ENCODE measurements at regions of chr9 and their contacts with region 1.

Region 1: GRCh38 chr9:112750111-112750767 is at the start of gene SNX30:
- DNase-seq: peak; percentile 79
- H3K4me3 Mint-ChIP-seq: peak within 1 kb of the TSS; percentile 84
- H3K27ac Mint-ChIP-seq: peak within 1 kb of the TSS; percentile 86
- H3K4me1 Mint-ChIP-seq: peaks cover 52% of the 10 kb centered on the region
- H3K27me3 Mint-ChIP-seq: peaks cover 3% of the 10 kb centered on the region
- total RNA-seq, gene SNX30: 2.4 and 2.8 TPM in 2 replicates

Region 2: DNA sequence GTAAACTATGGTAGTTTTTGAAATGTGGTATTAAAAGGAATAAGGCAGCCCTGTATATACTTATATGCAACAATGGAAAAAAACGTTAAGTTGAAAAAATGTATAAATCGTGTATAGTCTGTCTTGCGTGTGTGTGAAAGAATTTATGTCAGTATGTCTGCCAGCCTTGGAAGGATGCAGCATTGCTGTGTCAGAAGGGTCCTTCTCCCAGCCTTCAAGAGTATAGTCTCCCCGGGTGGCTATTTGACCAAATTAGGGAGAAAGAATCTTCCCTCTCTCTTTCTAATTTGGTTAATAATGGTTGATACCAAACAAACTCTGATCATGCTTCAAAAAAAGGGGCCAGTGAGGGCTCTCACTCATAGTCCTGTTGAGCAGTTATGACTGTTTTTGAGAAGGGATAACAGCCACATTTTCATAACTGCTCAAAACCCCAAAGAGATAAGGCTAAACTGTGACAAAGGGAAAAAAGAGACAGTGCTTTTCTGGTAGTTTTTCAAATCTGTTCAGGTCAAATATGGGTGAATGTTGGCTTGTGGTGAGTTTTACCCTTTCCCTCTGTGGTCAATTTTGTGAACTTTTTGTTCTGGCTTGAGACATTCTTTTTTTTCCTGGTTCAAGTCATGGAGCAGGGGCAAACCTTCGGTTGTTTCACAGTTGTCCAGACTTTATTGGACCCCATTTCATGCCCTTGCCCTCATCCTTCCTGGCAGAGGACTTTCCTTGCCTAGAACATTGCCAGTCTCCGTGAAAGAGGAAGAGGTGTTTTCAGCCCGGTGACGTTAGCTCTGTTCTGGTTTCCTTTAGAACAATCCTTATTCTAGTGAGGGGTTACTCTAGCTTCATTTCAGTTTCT is 21.3 kb after region 1 on chr9:
- intact Hi-C with region 1: loop called (anchors 1 kb)
- DNase-seq: no peak
- H3K4me3 Mint-ChIP-seq: no peak overlapping the region
- H3K27ac Mint-ChIP-seq: peak overlapping the region; percentile 51
- H3K4me1 Mint-ChIP-seq: peaks cover 26% of the 10 kb centered on the region
- H3K27me3 Mint-ChIP-seq: peaks cover 31% of the 10 kb centered on the region